PC-9 (cell line): ENCODE measurements at regions of chr16 and their contacts with region 1.

Region 1: DNA sequence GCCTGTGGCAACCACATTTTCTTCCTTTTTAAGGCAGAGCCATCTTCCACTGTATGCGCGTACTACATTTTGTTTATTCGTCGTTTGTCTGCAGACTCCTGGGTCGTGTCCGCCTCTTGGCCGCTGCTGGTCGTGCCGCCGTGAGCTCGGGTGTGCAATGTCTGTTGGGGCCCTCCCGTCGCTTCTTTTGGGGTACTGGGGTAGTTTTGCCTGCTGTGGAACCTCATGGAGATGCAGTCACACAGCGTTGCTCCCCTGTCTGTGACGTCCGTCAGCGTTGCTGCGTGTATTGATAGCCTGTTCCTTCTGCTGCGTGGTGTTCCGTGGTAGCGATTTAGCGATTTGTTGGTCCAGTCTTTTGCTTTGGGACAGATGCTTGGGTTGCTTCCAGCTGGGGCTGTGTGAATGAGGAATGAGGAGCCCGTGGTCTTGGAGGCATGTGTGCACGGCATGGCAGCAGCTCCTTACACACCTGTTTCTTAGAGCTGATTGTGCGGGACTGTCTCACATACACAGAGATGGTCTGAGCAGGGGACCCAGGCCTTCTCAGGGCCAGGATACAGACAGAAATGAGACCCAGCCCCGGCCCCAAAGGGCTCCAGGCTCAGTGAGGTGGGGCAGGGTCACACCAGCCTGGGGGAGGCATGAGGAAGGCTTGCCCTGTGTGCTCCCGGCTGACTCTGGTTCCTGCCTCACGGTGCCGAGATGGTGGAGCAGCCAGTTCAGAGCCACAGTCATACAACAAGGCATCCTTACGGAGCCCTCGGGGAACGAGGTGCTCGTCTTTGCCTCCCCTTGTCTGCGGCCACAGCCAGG is 78.4 kb upstream of the GSE1 start:
- DNase-seq: no peak
- H3K4me3 ChIP-seq: no peak overlapping the region
- H3K27ac ChIP-seq: no peak overlapping the region
- H3K4me1 ChIP-seq: no peaks in the 10 kb centered on the region
- H3K27me3 ChIP-seq: no peaks in the 10 kb centered on the region
- CTCF ChIP-seq: no peak

Region 2: GRCh38 chr16:85448557-85449197 is 86.1 kb before region 1 on chr16:
- CTCF ChIA-PET with region 1: interaction called, 15 read pairs
- POLR2A ChIA-PET with region 1: no interaction called
- intact Hi-C with region 1: no loop called
- DNase-seq: no peak
- H3K4me3 ChIP-seq: no peak overlapping the region
- H3K27ac ChIP-seq: no peak overlapping the region
- H3K4me1 ChIP-seq: no peaks in the 10 kb centered on the region
- H3K27me3 ChIP-seq: no peaks in the 10 kb centered on the region
- CTCF ChIP-seq: no peak

Region 3: DNA sequence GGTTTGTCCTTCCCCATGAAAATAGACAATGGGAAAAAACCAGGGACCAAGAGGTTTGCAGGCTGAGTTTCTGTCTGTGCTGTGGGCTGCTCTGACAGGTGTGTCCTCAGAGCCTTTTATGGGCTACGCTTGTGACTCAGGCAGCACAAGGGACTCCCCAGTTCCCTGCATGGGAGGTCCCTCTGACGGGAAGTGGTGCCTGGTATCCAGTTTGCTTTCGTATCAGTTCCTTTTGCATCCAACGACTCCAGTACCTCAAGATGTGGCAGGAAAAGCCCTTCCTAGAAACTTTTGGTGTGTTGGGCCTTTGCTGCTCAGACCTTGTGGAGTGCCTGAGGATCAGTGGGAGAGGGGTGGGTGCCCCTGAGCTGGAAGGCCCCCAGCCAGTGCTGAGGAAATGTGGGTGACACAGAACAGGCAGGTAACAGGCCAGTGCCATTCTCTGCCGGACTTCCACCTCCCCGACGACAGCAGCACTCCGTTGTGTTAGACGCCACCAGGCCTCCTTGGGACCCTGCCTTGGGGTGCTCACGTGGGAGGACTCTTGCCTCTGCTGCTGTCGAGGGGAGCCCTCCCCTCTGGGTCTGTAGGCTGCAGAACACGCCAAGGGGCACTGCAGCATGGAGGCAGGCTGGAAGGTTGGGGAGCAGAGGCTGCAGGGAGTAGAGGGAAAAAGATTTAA is 325.8 kb after region 1 on chr16:
- CTCF ChIA-PET with region 1: no interaction called
- POLR2A ChIA-PET with region 1: no interaction called
- intact Hi-C with region 1: no loop called
- DNase-seq: no peak
- H3K4me3 ChIP-seq: no peak overlapping the region
- H3K27ac ChIP-seq: no peak overlapping the region
- H3K4me1 ChIP-seq: no peaks in the 10 kb centered on the region
- H3K27me3 ChIP-seq: peaks cover 94% of the 10 kb centered on the region
- CTCF ChIP-seq: no peak